ENCODE measurements at regions of chr6 and their contacts with region 1.

Region 1: DNA sequence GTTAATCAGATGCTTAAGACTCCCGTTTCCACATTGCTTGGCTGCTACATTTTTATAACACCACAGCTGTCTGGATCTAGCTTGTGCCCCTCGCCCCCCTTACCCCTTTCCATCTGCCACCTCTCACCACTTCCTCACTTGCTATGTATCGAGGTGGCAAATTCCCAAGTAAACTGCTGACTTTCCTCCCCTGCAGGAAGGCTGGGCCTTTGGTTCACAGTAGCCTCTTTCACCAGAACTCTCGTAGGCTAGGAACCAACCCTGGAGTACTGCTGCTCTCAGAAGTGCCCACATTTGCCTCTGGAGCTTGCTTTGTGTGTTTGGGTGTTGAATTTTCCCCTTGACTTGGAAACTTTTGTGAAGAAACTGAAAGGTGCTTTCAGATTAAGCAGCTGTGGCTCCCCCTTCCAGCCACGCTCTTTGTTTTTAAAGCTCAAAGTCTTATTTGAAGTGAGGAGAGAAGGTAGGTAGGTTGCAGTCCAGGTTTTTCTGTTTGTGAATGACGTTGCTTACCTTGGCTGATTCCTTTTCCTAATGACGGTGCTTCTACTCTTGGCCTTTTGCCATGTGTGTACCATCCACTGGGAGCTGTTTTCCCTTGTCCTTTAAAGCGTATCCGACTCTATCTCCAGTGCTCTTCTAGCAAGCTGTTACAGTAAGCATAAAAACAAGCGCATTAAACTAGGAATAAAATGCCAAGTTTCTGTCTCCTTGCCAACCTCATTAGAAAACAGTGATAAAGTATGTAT is 90.4 kb downstream of the CARMIL1 start:
- DNase-seq: peak in 6 of 9 experiments; percentile 8 to 56 (median 34)
- ATAC-seq: peak; percentile 16
- H3K4me3 ChIP-seq: peak overlapping the region in 1 of 2 experiments; percentile 10
- H3K4me3 Mint-ChIP-seq: peak overlapping the region; percentile 85
- H3K27ac ChIP-seq: peak overlapping the region; percentile 11 to 28
- H3K27ac Mint-ChIP-seq: peak overlapping the region; percentile 94
- H3K4me1 ChIP-seq: peaks cover 48% of the 10 kb centered on the region
- H3K4me1 Mint-ChIP-seq: peaks cover 81% of the 10 kb centered on the region
- H3K27me3 ChIP-seq: no peaks in the 10 kb centered on the region
- H3K27me3 Mint-ChIP-seq: no peaks in the 10 kb centered on the region
- CTCF ChIP-seq: no peak

Region 2: GRCh38 chr6:25351485-25351884 is 18.1 kb before region 1 on chr6:
- CTCF ChIA-PET with region 1: interaction called, 5 read pairs
- POLR2A ChIA-PET with region 1: interaction called, 13 read pairs
- intact Hi-C with region 1: no loop called
- DNase-seq: no peak
- ATAC-seq: no peak
- H3K4me3 ChIP-seq: no peak overlapping the region
- H3K4me3 Mint-ChIP-seq: no peak overlapping the region
- H3K27ac ChIP-seq: no peak overlapping the region
- H3K27ac Mint-ChIP-seq: no peak overlapping the region
- H3K4me1 ChIP-seq: peaks cover 7% of the 10 kb centered on the region
- H3K4me1 Mint-ChIP-seq: peaks cover 25% of the 10 kb centered on the region
- H3K27me3 ChIP-seq: no peaks in the 10 kb centered on the region
- H3K27me3 Mint-ChIP-seq: no peaks in the 10 kb centered on the region
- CTCF ChIP-seq: no peak

Region 3: DNA sequence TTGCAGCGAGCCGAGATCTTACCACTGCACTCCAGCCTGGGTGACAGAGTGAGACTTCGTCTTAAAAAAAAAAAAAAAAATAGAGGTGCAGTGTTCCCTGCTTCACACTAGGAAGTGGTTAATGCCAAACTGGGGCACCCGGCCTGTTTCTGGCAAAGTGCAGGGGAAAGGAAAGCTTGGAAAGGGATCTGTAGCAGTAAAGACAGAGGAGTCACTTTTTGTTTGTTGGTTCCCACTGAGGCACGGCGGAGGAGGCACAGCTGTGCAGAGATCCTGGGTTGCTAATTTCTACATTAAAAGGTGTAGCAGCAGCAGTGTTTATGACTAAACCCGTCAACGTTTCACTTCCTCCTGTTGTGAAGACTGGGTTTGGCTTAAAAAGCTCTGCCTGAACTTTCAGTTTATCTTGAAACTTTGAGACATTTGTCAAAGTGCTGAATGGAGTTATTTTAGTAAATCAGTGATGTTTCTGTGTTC is 35.1 kb after region 1 on chr6:
- CTCF ChIA-PET with region 1: interaction called, 7 read pairs
- POLR2A ChIA-PET with region 1: interaction called, 23 read pairs
- intact Hi-C with region 1: loop called in 1 of 2 experiments (anchors 1 kb)
- DNase-seq: peak; percentile 2 to 77 (median 33)
- ATAC-seq: peak; percentile 89
- H3K4me3 ChIP-seq: peak overlapping the region; percentile 38
- H3K4me3 Mint-ChIP-seq: no peak overlapping the region
- H3K27ac ChIP-seq: peak overlapping the region; percentile 55 to 67
- H3K27ac Mint-ChIP-seq: no peak overlapping the region
- H3K4me1 ChIP-seq: peaks cover 36% of the 10 kb centered on the region
- H3K4me1 Mint-ChIP-seq: peaks cover 29% of the 10 kb centered on the region
- H3K27me3 ChIP-seq: no peaks in the 10 kb centered on the region
- H3K27me3 Mint-ChIP-seq: no peaks in the 10 kb centered on the region
- CTCF ChIP-seq: no peak

Region 4: GRCh38 chr6:25472306-25472705 is 102.7 kb after region 1 on chr6:
- CTCF ChIA-PET with region 1: interaction called, 3 read pairs
- POLR2A ChIA-PET with region 1: no interaction called
- intact Hi-C with region 1: loop called in 1 of 2 experiments (anchors 10 kb)
- DNase-seq: no peak
- ATAC-seq: no peak
- H3K4me3 ChIP-seq: no peak overlapping the region
- H3K4me3 Mint-ChIP-seq: no peak overlapping the region
- H3K27ac ChIP-seq: no peak overlapping the region
- H3K27ac Mint-ChIP-seq: no peak overlapping the region
- H3K4me1 ChIP-seq: no peaks in the 10 kb centered on the region
- H3K4me1 Mint-ChIP-seq: no peaks in the 10 kb centered on the region
- H3K27me3 ChIP-seq: no peaks in the 10 kb centered on the region
- H3K27me3 Mint-ChIP-seq: no peaks in the 10 kb centered on the region
- CTCF ChIP-seq: peak; percentile 43